ENCODE measurements at regions of chr16 and their contacts with region 1.

Region 1: GRCh38 chr16:8660841-8661301 is 13.5 kb upstream of the ABAT start:
- DNase-seq: peak; percentile 47 to 72
- ATAC-seq: peak; percentile 88 to 95
- H3K4me3 ChIP-seq: no peak overlapping the region
- H3K27ac ChIP-seq: no peak overlapping the region
- H3K4me1 ChIP-seq: no peaks in the 10 kb centered on the region
- CTCF ChIP-seq: peak; percentile 64
- EP300 ChIP-seq: no peak
- POLR2A ChIP-seq: no peak
- RAD21 ChIP-seq: peak; percentile 81 to 89

Region 2: DNA sequence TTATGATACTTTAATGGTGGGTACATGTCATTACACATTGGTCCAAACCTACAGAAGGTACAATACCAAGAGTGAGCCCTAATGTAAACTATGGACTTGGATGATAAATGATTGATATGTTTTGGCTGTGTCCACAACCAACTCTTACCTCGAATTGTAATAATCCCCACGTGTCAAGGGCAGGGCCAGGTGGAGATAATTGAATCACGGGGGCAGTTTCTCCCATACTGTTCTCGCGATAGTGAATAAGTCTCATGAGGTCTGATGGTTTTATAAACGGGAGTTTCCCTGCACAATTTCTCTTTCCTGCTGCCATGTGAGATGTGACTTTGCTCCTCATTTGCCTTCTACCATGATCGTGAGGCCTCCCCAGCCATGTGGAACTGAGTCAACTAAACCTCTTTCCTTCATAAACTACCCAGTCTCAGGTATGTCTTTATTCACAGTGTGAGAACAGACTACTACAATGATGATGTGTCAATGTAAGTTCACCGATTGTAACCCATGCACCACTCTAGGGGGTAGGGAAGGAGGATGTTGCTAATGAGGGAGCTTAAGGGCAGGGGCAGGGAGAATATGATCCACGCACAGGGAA is 46.3 kb before region 1 on chr16:
- CTCF ChIA-PET with region 1: no interaction called
- POLR2A ChIA-PET with region 1: no interaction called
- DNase-seq: no peak
- ATAC-seq: no peak
- H3K4me3 ChIP-seq: no peak overlapping the region
- H3K27ac ChIP-seq: no peak overlapping the region
- H3K4me1 ChIP-seq: no peaks in the 10 kb centered on the region
- CTCF ChIP-seq: no peak
- EP300 ChIP-seq: no peak
- POLR2A ChIP-seq: no peak
- RAD21 ChIP-seq: no peak

Region 3: DNA sequence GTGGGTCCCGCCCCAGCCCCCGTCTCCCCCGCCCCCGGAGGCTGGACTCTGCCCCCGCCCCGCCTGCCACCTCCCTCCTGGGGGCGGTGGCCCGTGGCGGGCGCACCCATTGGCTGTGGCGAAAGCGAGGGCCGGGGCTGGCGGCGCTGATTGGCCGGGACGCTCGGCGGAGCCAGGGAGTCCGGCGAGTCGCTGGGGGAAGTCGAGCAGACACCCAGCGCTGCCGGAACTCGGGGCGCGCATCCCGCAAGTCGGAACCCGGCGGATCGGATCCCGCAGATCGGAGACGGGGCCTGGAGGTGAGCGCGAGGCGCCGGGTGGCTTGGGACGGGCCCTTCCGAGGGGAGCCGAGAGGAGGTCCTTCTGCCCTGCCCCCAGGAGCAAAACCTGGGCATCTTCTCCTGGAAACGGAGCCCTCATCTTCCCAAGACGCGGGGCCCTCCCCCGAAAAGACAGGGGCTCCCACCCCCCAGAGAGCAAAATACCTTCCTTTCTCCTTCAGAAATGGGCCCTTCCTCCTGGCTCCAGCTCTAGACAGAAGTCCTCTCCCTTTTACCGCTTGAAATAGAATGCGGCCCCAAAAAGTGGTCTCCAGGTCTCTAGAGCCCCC is 13.6 kb after region 1 on chr16 and contains the start of gene ABAT:
- CTCF ChIA-PET with region 1: interaction called, 15 read pairs
- POLR2A ChIA-PET with region 1: no interaction called
- DNase-seq: peak; percentile 66 to 93
- ATAC-seq: peak; percentile 97 to 99
- H3K4me3 ChIP-seq: peak within 1 kb of the TSS; percentile 44
- H3K27ac ChIP-seq: peak within 1 kb of the TSS in 1 of 2 experiments; percentile 66; a peak in 3 of 6 replicates
- H3K4me1 ChIP-seq: peaks cover 29% of the 10 kb centered on the region
- CTCF ChIP-seq: no peak
- EP300 ChIP-seq: no peak
- POLR2A ChIP-seq: no peak
- RAD21 ChIP-seq: no peak
- polyA plus RNA-seq, gene ABAT: 1.2 and 1.3 TPM in 2 replicates

Region 4: DNA sequence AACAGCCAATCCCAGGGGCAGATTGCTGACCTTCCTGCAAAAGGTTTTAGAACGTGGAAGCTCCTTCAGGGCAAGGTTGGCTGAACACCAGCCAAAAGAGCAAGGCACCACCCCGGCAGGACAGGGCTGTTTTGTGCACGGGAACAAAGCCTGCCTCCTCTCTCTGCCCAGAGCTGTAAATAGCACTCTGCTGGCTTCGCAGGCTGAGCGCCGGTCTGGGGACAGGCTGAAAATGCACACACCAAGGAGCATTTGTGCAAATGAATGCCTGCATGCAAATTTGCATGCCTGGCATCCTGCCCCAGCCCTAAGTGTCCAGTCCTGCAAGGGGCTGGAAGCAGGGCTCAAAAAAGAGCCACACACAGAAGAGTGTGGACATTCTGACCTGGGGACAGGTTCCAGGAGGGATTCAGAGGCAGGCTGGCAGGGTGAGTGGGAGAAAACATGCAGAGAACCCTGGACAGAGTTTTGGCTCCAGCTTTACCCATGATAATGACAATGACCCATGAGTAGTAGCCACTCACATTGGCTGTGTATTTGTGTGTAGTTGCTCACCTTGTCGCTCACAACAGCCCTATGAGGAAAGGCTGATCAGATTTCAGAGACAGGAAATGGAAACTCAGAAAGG is 25.2 kb after region 1 on chr16:
- CTCF ChIA-PET with region 1: interaction called, 10 read pairs
- POLR2A ChIA-PET with region 1: no interaction called
- DNase-seq: no peak
- ATAC-seq: peak; percentile 37 to 50; a peak in 2 of 6 replicates
- H3K4me3 ChIP-seq: no peak overlapping the region
- H3K27ac ChIP-seq: no peak overlapping the region
- H3K4me1 ChIP-seq: no peaks in the 10 kb centered on the region
- CTCF ChIP-seq: no peak
- EP300 ChIP-seq: no peak
- POLR2A ChIP-seq: no peak
- RAD21 ChIP-seq: no peak

Region 5: DNA sequence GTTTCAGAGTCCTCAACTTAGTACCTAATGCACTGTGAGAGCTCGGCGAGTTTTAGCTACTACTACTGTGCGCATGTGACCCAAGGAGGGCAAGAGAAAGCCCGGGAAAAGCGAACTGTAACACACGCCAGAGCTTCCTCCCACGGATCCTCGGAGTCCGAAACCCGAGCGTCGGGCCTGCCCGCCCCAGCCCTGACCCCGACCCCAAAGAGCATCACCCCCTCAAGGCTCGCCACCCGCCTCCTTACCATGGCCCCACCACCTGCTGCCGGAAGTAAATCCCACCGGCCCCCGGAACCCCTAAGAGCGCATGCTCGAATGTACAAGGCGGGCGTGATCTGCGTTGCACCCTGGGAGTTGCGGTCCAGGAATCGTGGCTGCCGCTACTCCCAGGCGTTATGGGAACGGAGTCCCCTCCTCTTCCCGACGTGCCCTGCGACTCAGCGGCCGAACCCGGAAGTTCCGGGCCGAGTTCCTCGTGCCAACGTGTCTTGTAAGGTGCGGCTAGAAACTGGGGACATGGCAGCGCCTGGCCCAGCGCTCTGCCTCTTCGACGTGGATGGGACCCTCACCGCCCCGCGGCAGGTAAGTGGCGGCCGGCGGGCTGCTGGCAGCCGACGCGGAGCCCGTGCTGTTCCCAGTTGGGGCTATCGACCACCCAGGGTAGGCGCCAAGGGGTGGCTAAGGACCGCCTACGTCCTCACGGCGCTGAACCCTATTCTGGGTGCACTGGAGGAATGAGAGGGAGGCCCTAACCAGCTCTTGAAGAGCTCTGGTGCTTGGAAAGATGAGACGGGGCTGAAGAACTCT is 136.7 kb after region 1 on chr16 and contains the starts of genes PMM2 and TMEM186:
- CTCF ChIA-PET with region 1: interaction called, 173 read pairs
- POLR2A ChIA-PET with region 1: no interaction called
- DNase-seq: peak; percentile 96 to 98
- ATAC-seq: peak; percentile 97 to 98
- H3K4me3 ChIP-seq: peak within 1 kb of the TSS; percentile 88
- H3K27ac ChIP-seq: peak within 1 kb of the TSS; percentile 95 to 96
- H3K4me1 ChIP-seq: peaks cover 28% of the 10 kb centered on the region
- CTCF ChIP-seq: no peak
- EP300 ChIP-seq: no peak
- POLR2A ChIP-seq: peak; percentile 89
- RAD21 ChIP-seq: no peak
- polyA plus RNA-seq, gene PMM2: 46.4 and 56.6 TPM in 2 replicates
- polyA plus RNA-seq, gene TMEM186: 10.9 and 12.1 TPM in 2 replicates

Region 6: GRCh38 chr16:8878521-8878911 is 217.6 kb after region 1 on chr16:
- CTCF ChIA-PET with region 1: interaction called, 47 read pairs
- POLR2A ChIA-PET with region 1: no interaction called
- DNase-seq: peak in 1 of 2 experiments; percentile 51
- ATAC-seq: peak; percentile 48 to 52; a peak in 4 of 6 replicates
- H3K4me3 ChIP-seq: no peak overlapping the region
- H3K27ac ChIP-seq: peak overlapping the region; percentile 71 to 83
- H3K4me1 ChIP-seq: peaks cover 17% of the 10 kb centered on the region
- CTCF ChIP-seq: no peak
- EP300 ChIP-seq: no peak
- POLR2A ChIP-seq: no peak
- RAD21 ChIP-seq: no peak

Measured in A549 (cell line).